ENCODE measurements at regions of chr9 and their contacts with region 1.

Region 1: GRCh38 chr9:26437056-26437711 is 455.4 kb downstream of the CAAP1 start:
- DNase-seq: no peak
- ATAC-seq: no peak
- H3K4me3 ChIP-seq: no peak overlapping the region
- H3K27ac ChIP-seq: no peak overlapping the region
- H3K4me1 ChIP-seq: no peaks in the 10 kb centered on the region
- H3K27me3 ChIP-seq: no peaks in the 10 kb centered on the region
- CTCF ChIP-seq: no peak

Region 2: GRCh38 chr9:26502311-26502710 is 65.1 kb after region 1 on chr9:
- intact Hi-C with region 1: loop called (anchors 10 kb)
- DNase-seq: no peak
- ATAC-seq: peak; percentile 38
- H3K4me3 ChIP-seq: no peak overlapping the region
- H3K27ac ChIP-seq: no peak overlapping the region
- H3K4me1 ChIP-seq: no peaks in the 10 kb centered on the region
- H3K27me3 ChIP-seq: no peaks in the 10 kb centered on the region
- CTCF ChIP-seq: no peak

Measured in upper lobe of right lung (tissue), 1 donor.